ENCODE measurements at regions of chr11 and their contacts with region 1.

Region 1: GRCh38 chr11:113896156-113896879 is 8.3 kb upstream of the HTR3B start:
- DNase-seq: peak; percentile 37
- ATAC-seq: peak; percentile 80
- H3K4me3 Mint-ChIP-seq: no peak overlapping the region
- H3K27ac Mint-ChIP-seq: no peak overlapping the region
- H3K4me1 Mint-ChIP-seq: peaks cover 26% of the 10 kb centered on the region
- H3K27me3 Mint-ChIP-seq: no peaks in the 10 kb centered on the region
- CTCF ChIP-seq: peak; percentile 49; the same call in 1 of the 2 replicates

Region 2: GRCh38 chr11:113752932-113753331 is 143.4 kb before region 1 on chr11:
- CTCF ChIA-PET with region 1: no interaction called
- POLR2A ChIA-PET with region 1: no interaction called
- DNase-seq: no peak
- ATAC-seq: no peak
- H3K4me3 Mint-ChIP-seq: no peak overlapping the region
- H3K27ac Mint-ChIP-seq: no peak overlapping the region
- H3K4me1 Mint-ChIP-seq: no peaks in the 10 kb centered on the region
- H3K27me3 Mint-ChIP-seq: no peaks in the 10 kb centered on the region
- CTCF ChIP-seq: no peak

Region 3: GRCh38 chr11:113796663-113797259 is 99.6 kb before region 1 on chr11:
- CTCF ChIA-PET with region 1: interaction called, 15 read pairs
- POLR2A ChIA-PET with region 1: no interaction called
- DNase-seq: no peak
- ATAC-seq: peak; percentile 94
- H3K4me3 Mint-ChIP-seq: no peak overlapping the region
- H3K27ac Mint-ChIP-seq: no peak overlapping the region
- H3K4me1 Mint-ChIP-seq: no peaks in the 10 kb centered on the region
- H3K27me3 Mint-ChIP-seq: no peaks in the 10 kb centered on the region
- CTCF ChIP-seq: peak; percentile 36; the same call in 1 of the 2 replicates

Region 4: DNA sequence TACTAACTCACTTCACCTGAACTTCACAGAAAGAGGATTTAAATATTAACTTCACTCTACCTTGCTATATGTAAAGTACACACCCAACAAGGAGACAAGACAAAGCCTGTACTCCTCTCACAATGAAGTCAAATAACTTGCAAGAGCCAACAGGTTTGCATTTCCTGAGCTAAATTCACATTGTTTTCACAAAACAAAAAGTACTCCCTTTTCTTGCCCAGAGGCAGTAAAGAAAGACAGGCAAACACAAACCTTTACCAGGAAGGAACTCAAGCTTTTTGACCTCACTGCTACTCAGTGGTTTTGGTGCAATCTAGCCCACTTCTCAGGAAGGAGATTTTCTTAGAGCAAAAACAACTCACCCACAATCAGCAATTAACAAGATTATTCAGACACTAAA is 36.7 kb before region 1 on chr11:
- CTCF ChIA-PET with region 1: interaction called, 11 read pairs
- POLR2A ChIA-PET with region 1: no interaction called
- DNase-seq: no peak
- ATAC-seq: peak; percentile 59
- H3K4me3 Mint-ChIP-seq: peak overlapping the region; percentile 39
- H3K27ac Mint-ChIP-seq: peak overlapping the region; percentile 100
- H3K4me1 Mint-ChIP-seq: peaks cover 86% of the 10 kb centered on the region
- H3K27me3 Mint-ChIP-seq: no peaks in the 10 kb centered on the region
- CTCF ChIP-seq: no peak

Region 5: GRCh38 chr11:113926273-113927197 is 30.2 kb after region 1 on chr11:
- CTCF ChIA-PET with region 1: interaction called, 10 read pairs
- POLR2A ChIA-PET with region 1: no interaction called
- DNase-seq: no peak
- ATAC-seq: no peak
- H3K4me3 Mint-ChIP-seq: no peak overlapping the region
- H3K27ac Mint-ChIP-seq: no peak overlapping the region
- H3K4me1 Mint-ChIP-seq: no peaks in the 10 kb centered on the region
- H3K27me3 Mint-ChIP-seq: no peaks in the 10 kb centered on the region
- CTCF ChIP-seq: no peak

Region 6: DNA sequence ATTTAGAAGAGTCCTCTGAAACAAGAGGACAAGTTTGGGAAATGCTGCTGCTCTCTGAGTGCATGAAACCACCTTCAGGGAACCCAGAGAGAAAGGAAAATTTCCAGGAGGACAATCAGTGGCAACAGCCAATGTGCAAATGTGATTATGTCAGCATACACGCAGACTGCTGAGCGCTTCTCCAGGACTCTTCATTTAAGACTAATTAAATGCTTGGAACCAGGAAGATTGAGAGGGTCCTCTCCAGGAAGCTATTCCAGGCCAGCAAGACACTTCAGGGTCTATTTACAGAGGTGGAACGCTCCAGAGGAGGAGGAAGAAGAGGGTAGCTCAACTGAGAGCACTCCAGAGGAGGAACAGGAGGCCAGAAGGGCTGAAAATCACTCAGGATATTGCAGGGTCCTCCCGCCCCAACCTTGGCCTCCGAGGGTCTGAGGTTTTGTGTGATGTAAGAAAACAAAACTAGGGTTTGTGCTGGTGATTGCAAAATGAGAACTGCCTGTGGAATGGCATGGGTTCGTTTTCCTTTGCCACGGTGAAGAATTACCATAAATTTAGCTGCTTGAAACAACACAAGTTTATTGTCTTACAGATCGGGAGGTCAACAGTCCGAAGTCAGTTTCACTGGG is 64.5 kb after region 1 on chr11:
- CTCF ChIA-PET with region 1: interaction called, 10 read pairs
- POLR2A ChIA-PET with region 1: no interaction called
- DNase-seq: no peak
- ATAC-seq: no peak
- H3K4me3 Mint-ChIP-seq: no peak overlapping the region
- H3K27ac Mint-ChIP-seq: peak overlapping the region; percentile 54; the same call in 1 of the 2 replicates
- H3K4me1 Mint-ChIP-seq: peaks cover 59% of the 10 kb centered on the region
- H3K27me3 Mint-ChIP-seq: peaks cover 10% of the 10 kb centered on the region
- CTCF ChIP-seq: no peak

Region 7: DNA sequence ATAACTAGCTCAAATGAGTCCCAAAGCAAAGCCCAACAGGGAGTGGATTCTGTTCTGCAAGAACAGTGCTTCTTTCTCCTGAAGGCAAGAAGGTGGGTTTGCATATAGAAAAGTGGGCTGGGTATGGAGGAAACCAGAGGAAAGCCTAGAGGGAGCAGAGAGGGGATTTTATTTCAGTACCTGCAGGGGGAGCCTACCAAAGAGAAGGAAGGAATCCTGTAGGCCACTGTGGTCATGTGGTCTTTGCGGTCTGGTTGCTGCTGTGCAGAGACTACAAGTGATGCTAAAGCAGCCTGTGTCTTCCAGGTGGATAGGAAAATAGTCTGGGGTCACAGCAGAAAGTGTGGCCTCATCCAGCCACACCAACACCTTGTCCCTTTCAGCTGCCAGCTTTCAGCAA is 130.0 kb after region 1 on chr11:
- CTCF ChIA-PET with region 1: interaction called, 13 read pairs
- POLR2A ChIA-PET with region 1: no interaction called
- DNase-seq: peak; percentile 18
- ATAC-seq: peak; percentile 100
- H3K4me3 Mint-ChIP-seq: no peak overlapping the region
- H3K27ac Mint-ChIP-seq: no peak overlapping the region
- H3K4me1 Mint-ChIP-seq: peaks cover 4% of the 10 kb centered on the region; the same call in 1 of the 2 replicates
- H3K27me3 Mint-ChIP-seq: no peaks in the 10 kb centered on the region; the same call in none of the 2 replicates
- CTCF ChIP-seq: no peak

Region 8: DNA sequence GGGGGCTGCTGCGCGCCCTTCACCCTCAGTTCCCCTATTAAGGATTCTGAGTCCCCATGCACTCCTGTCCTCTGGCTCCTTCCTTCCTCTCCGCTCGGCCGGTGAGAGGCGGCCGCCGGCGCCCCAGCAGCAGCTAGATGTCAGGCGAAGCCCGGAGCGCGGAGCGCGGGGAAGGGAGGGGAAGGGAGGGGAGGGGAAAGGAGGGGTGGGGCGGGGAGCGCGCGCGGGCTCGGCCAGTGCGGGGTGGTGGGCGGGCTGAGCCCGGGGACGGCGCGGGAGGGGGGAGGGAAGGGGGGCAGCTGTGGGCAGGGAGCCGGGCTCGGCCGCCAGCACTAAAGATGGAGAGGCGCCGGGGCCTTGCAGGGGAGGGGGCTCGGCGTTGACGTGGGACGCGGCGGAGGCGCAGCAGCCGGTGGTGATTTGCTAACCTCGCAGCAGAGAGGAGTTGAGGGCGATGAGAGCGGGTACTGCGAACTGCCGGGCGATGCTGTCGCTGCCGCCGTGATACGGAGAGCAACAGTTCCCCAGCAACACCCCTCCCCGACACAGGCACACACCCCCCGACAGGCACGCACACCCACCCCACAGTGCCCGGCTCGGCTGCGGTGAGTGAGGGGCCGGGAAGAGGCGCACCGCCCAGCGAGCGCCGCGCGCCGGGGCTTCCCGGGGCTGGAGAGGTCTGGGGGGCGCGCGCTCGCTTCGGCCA is 163.1 kb after region 1 on chr11 and contains the start of gene ZBTB16:
- CTCF ChIA-PET with region 1: interaction called, 17 read pairs
- POLR2A ChIA-PET with region 1: no interaction called
- DNase-seq: peak; percentile 79
- ATAC-seq: peak; percentile 72
- H3K4me3 Mint-ChIP-seq: peak within 1 kb of the TSS; percentile 81
- H3K27ac Mint-ChIP-seq: no peak within 1 kb of the TSS
- H3K4me1 Mint-ChIP-seq: peaks cover 23% of the 10 kb centered on the region
- H3K27me3 Mint-ChIP-seq: peaks cover 100% of the 10 kb centered on the region
- CTCF ChIP-seq: no peak
- total RNA-seq, gene ZBTB16: 0.34 to 0.57 TPM (median 0.55 TPM) in 3 replicates

Region 9: DNA sequence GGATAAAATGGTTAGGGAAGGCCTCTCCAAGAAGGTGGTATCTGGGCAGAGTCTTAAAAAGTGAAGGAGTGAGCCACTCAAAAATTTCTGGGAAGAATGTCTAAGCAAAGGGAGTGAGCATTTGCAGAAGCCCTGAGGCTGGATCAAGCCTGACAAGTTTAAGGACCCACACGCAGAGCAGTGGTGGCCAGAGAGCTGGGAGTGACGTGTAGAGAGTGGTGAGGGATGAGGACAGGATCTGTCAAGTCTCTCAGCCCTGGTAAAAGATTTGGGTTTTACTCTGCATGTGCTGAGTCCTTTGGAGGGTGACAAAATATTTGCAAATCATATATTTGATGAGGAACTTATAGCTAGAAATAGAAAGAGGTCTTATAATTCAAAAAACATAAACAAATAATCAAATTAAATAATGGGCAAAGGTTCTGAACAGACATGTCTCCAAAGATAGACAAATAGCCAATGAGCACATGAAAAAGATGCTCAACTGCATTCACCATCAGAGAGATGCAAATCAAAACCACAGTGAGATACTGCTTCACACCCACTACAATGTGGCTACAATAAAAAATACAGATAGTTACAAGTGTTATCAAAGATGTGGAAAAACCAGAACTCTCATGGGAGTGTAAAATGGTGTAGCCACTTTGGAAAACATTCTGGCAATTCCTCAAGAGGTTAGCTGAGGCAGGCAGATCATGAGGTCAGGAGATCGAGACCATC is 292.7 kb after region 1 on chr11:
- CTCF ChIA-PET with region 1: no interaction called
- POLR2A ChIA-PET with region 1: no interaction called
- DNase-seq: no peak
- ATAC-seq: no peak
- H3K4me3 Mint-ChIP-seq: no peak overlapping the region
- H3K27ac Mint-ChIP-seq: no peak overlapping the region
- H3K4me1 Mint-ChIP-seq: peaks cover 4% of the 10 kb centered on the region; the same call in 1 of the 2 replicates
- H3K27me3 Mint-ChIP-seq: peaks cover 6% of the 10 kb centered on the region; the same call in 1 of the 2 replicates
- CTCF ChIP-seq: no peak